Posterior vena cava (tissue), 2 donors: ENCODE measurements at regions of chr15 and their contacts with region 1.

Region 1: DNA sequence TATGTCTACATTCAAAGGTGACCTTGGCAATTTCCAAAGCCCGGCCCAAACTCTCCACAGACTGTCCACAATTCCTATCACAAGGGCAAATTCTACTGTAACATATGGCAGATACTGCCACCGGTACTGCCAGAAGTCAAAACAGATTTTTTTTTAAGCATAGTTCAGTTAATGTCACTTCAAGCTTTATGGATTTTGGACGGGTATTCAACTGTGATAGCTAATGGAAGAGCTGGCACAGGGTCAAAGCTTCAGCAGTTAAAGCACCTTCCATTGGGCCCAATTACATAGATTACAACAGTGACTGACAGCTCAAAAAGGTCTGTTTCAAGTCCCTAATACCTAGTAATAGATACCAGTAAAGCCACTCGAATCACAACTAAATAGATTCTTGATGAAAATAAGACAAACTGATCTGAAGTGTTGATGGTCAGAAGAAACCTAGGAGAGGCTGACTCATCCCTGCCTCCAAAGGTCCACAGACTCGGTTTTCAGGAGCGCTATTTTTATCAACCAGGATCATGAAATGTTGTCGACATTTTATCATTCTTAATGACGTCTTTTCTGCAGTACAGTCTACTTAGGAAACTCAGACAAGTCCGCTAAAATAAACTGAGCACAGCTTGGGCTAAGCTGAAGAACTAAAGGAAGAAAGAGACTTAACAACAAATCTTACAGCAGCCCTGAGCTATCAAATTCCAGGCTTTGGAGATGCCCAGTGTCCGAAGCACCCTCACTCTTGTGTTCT is 38.7 kb downstream of the ANXA2 start:
- DNase-seq: no peak

Region 2: DNA sequence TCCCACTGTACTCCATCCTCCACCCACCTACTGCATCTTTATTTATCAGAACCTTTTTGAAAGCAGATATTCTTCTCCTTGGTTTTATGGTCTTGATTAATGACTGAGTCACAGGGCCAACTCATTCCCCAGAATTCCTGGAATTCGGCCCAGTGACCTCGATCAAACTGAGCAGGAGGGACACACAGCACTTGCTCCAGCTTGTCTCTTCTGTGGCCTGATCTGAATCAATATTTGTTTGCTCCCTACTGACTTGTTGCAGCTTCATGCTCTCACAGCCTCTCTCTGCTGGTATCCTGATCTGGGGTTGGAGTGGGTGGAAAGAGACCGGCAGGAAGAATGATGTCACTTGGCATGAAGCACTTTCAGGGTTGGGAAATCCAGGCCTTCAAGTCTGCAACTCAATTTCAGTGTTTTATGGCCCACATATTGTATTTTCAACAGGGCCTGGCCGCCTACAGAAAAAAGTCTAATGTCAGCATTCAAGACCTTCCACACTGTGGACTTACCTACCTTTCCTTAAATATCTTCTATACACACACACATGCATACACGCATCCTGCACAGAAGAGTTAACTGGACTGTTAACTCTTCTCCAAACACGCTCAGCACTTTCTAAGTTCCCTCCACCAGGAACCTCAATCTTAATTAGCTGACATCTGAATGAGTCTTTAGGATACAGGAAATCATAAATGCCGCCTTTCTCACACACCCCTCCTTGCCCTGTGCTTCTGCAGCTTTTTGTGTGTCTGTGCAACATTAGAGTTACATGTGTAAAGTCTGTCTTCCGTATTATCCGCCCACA is 34.1 kb after region 1 on chr15:
- intact Hi-C with region 1: loop called in 1 of 2 experiments (anchors 5 kb)
- DNase-seq: no peak

Region 3: DNA sequence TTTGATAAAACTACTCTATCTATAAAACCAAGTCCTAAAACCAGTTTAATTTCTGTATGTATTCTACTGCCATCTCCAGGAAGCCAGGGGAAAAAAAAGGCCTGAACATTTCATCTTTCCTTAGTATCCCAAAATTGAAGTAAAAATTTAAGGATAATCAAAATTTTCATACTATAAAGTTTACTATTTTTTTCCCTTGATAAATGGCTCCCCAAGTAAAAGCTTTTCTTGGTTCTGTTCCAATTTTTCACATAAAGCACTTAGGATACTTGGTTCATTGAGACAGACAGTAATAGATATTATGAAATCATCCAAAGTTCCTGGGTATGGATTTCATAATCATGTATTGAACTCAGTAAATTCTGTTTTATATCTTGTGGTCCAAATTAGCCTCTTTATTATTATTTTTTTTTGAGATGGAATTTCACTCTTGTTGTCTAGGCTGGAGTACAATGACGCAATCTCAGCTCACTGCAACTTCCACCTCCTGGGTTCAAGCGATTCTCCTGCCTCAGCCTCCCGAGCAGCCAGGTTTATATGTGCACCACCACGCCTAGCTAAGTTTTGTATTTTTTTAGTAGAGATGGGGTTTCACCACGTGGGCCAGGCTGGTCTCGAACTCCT is 85.3 kb after region 1 on chr15:
- intact Hi-C with region 1: loop called in 1 of 2 experiments (anchors 10 kb)
- DNase-seq: no peak